ENCODE measurements at regions of chr14 and their contacts with region 1.

Region 1: GRCh38 chr14:70821584-70822529 is 12.5 kb upstream of the MAP3K9 start:
- DNase-seq: peak; percentile 75
- CTCF ChIP-seq: no peak

Region 2: GRCh38 chr14:70759398-70759797 is 62.5 kb before region 1 on chr14:
- CTCF ChIA-PET with region 1: interaction called, 10 read pairs
- POLR2A ChIA-PET with region 1: no interaction called
- DNase-seq: no peak
- CTCF ChIP-seq: no peak

Region 3: GRCh38 chr14:70836946-70837345 is 15.1 kb after region 1 on chr14:
- CTCF ChIA-PET with region 1: interaction called, 81 read pairs
- POLR2A ChIA-PET with region 1: no interaction called
- DNase-seq: no peak
- CTCF ChIP-seq: no peak

Measured in GM10248 (cell line).